ENCODE measurements at regions of chr5 and their contacts with region 1.

Region 1: DNA sequence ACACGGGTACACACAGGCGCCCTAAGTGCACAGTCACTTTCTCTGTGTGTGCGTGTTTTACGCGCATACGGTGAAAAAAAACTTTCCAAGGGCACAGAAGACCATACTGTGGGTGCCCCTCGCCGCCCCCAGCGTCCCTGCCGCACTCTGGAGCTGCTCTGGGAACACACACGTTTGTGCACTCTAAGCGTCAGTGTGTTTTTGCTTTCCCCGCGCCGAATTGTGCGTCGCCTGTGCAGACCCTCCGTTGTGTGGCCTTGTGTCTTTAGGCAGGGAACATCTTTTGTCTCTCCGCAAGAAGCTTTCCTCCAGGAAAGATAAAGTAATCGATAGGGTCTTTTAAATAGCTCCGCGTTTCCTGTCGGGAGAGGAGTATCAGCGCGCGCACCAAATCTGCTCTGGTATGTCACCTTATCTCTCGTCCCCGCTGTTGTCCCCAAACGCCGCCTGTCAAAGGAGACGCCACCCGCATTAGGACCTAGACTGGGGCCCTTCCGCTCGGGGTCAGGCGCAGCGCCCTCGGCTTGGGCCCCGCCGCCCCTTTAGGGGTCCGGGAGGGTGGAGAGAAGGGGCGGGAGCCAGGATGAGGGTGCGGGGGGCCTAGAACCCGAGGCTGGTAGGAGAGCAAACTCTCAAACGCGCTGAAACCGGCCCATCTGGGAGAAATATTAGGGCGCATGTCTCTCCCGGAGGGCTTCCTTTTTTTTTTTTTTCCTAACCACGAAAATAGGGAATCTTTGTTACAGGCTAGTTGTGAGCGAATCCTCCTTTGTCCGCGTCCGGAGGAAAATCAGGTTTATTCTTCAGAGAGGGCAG is 10.5 kb upstream of the NKX2-5 start:
- DNase-seq: no peak
- ATAC-seq: no peak
- H3K4me3 Mint-ChIP-seq: peak overlapping the region; percentile 21
- H3K27ac Mint-ChIP-seq: no peak overlapping the region
- H3K4me1 Mint-ChIP-seq: peaks cover 14% of the 10 kb centered on the region
- H3K27me3 Mint-ChIP-seq: peaks cover 71% of the 10 kb centered on the region

Region 2: GRCh38 chr5:173232499-173233346 is 12.8 kb before region 1 on chr5:
- CTCF ChIA-PET with region 1: interaction called, 5 read pairs
- POLR2A ChIA-PET with region 1: no interaction called
- intact Hi-C with region 1: loop called (anchors 1 to 2 kb)
- DNase-seq: peak; percentile 42
- ATAC-seq: peak; percentile 17
- H3K4me3 Mint-ChIP-seq: peak overlapping the region; percentile 14
- H3K27ac Mint-ChIP-seq: no peak overlapping the region
- H3K4me1 Mint-ChIP-seq: peaks cover 43% of the 10 kb centered on the region
- H3K27me3 Mint-ChIP-seq: peaks cover 87% of the 10 kb centered on the region

Region 3: GRCh38 chr5:173302547-173303066 is 57.1 kb after region 1 on chr5:
- CTCF ChIA-PET with region 1: no interaction called
- POLR2A ChIA-PET with region 1: no interaction called
- intact Hi-C with region 1: no loop called
- DNase-seq: no peak
- ATAC-seq: no peak
- H3K4me3 Mint-ChIP-seq: no peak overlapping the region
- H3K27ac Mint-ChIP-seq: no peak overlapping the region
- H3K4me1 Mint-ChIP-seq: no peaks in the 10 kb centered on the region
- H3K27me3 Mint-ChIP-seq: peaks cover 20% of the 10 kb centered on the region

Region 4: GRCh38 chr5:173315495-173316350 is 70.2 kb after region 1 on chr5:
- CTCF ChIA-PET with region 1: no interaction called
- POLR2A ChIA-PET with region 1: no interaction called
- intact Hi-C with region 1: no loop called
- DNase-seq: peak; percentile 51
- ATAC-seq: peak; percentile 55
- H3K4me3 Mint-ChIP-seq: no peak overlapping the region
- H3K27ac Mint-ChIP-seq: no peak overlapping the region
- H3K4me1 Mint-ChIP-seq: no peaks in the 10 kb centered on the region
- H3K27me3 Mint-ChIP-seq: peaks cover 39% of the 10 kb centered on the region